MCF 10A (cell line): ENCODE measurements at regions of chr19 and their contacts with region 1.

Region 1: GRCh38 chr19:49937750-49938381 is 8.6 kb upstream of the NUP62 start:
- DNase-seq: peak; percentile 78
- H3K4me3 Mint-ChIP-seq: no peak overlapping the region
- H3K27ac Mint-ChIP-seq: no peak overlapping the region
- H3K4me1 Mint-ChIP-seq: no peaks in the 10 kb centered on the region
- H3K27me3 Mint-ChIP-seq: peaks cover 7% of the 10 kb centered on the region
- CTCF ChIP-seq: peak; percentile 98

Region 2: GRCh38 chr19:49913720-49914119 is 24.1 kb before region 1 on chr19:
- CTCF ChIA-PET with region 1: no interaction called
- POLR2A ChIA-PET with region 1: no interaction called
- intact Hi-C with region 1: no loop called
- DNase-seq: no peak
- H3K4me3 Mint-ChIP-seq: no peak overlapping the region
- H3K27ac Mint-ChIP-seq: no peak overlapping the region
- H3K4me1 Mint-ChIP-seq: peaks cover 9% of the 10 kb centered on the region
- H3K27me3 Mint-ChIP-seq: no peaks in the 10 kb centered on the region
- CTCF ChIP-seq: no peak

Region 3: DNA sequence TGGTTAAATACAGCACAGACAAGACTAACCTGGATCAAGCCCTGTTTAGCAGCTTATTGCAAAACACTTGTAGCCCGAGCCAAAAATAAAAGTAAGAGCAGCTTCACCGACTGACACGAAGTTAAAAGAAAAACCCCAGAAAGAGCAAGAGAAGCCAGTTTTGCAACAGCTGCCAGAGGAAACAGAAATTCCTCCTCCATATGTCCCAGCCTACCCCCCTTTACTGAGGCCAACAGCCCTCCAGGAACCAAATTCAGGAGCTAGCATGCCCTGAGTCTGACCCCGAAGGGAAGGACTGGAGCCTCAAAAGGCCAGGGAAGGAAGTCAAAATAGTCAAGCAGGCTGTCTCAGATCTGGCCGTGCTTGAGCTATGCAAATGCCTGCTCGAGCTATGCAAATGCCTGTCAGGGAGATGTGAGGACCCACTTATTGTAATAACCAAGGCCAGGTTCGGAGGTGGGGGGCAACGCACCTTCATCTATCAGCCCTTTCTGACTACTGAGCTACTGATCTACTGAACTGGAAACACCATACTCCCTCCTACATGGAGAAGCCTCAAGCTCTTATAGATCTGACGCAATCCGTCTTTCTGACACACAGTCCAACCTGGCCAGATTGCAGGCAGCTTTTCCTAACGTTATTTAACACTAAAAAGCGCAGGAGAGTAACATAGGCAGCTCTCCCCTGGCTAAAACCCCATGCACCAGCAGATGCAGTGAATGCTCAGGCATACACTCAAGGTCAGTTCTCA is 16.4 kb after region 1 on chr19:
- CTCF ChIA-PET with region 1: interaction called, 11 read pairs
- POLR2A ChIA-PET with region 1: interaction called, 3 read pairs
- intact Hi-C with region 1: no loop called
- DNase-seq: peak; percentile 18
- H3K4me3 Mint-ChIP-seq: peak overlapping the region; percentile 24
- H3K27ac Mint-ChIP-seq: no peak overlapping the region
- H3K4me1 Mint-ChIP-seq: peaks cover 7% of the 10 kb centered on the region
- H3K27me3 Mint-ChIP-seq: peaks cover 20% of the 10 kb centered on the region
- CTCF ChIP-seq: no peak

Region 4: DNA sequence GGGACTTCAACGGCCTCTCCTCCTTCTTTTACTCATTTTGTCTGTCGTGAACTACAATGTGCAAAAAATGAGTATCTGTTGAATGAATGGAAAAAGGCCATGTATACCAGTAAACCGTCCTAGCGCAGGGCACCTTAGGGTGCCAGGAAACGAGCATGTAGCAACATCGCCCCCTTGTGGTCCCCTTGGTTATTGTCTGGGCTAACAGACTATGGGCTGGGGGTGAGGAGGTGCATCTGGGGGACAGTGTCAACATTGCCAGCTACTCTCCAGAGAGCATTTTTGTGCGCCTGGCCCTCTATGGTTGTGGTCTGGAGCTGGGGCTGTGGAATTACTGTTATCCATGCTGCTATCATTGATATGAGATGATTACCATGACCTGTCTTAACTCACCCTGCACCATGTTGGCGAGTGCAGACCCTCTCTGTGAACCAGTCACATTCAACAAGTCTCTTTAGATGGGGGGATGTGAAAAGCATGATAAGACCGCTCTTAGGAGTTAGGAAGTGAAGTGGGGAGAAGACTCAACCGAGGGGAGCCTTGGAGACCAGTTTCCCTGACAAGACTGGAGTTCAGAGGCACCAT is 45.9 kb after region 1 on chr19:
- CTCF ChIA-PET with region 1: interaction called, 4 read pairs
- POLR2A ChIA-PET with region 1: no interaction called
- intact Hi-C with region 1: loop called (anchors 1 kb)
- DNase-seq: peak; percentile 69
- H3K4me3 Mint-ChIP-seq: no peak overlapping the region
- H3K27ac Mint-ChIP-seq: no peak overlapping the region
- H3K4me1 Mint-ChIP-seq: no peaks in the 10 kb centered on the region
- H3K27me3 Mint-ChIP-seq: no peaks in the 10 kb centered on the region
- CTCF ChIP-seq: peak; percentile 85

Region 5: GRCh38 chr19:50030937-50031336 is 93.1 kb after region 1 on chr19:
- CTCF ChIA-PET with region 1: no interaction called
- POLR2A ChIA-PET with region 1: no interaction called
- intact Hi-C with region 1: no loop called
- DNase-seq: no peak
- H3K4me3 Mint-ChIP-seq: no peak overlapping the region
- H3K27ac Mint-ChIP-seq: no peak overlapping the region
- H3K4me1 Mint-ChIP-seq: peaks cover 2% of the 10 kb centered on the region
- H3K27me3 Mint-ChIP-seq: no peaks in the 10 kb centered on the region
- CTCF ChIP-seq: no peak

Region 6: GRCh38 chr19:50042363-50043024 is 104.6 kb after region 1 on chr19:
- CTCF ChIA-PET with region 1: no interaction called
- POLR2A ChIA-PET with region 1: no interaction called
- intact Hi-C with region 1: no loop called
- DNase-seq: no peak
- H3K4me3 Mint-ChIP-seq: no peak overlapping the region
- H3K27ac Mint-ChIP-seq: no peak overlapping the region
- H3K4me1 Mint-ChIP-seq: no peaks in the 10 kb centered on the region
- H3K27me3 Mint-ChIP-seq: no peaks in the 10 kb centered on the region
- CTCF ChIP-seq: no peak

Region 7: GRCh38 chr19:50059045-50059444 is 121.2 kb after region 1 on chr19:
- CTCF ChIA-PET with region 1: no interaction called
- POLR2A ChIA-PET with region 1: no interaction called
- intact Hi-C with region 1: no loop called
- DNase-seq: no peak
- H3K4me3 Mint-ChIP-seq: no peak overlapping the region
- H3K27ac Mint-ChIP-seq: no peak overlapping the region
- H3K4me1 Mint-ChIP-seq: no peaks in the 10 kb centered on the region
- H3K27me3 Mint-ChIP-seq: no peaks in the 10 kb centered on the region
- CTCF ChIP-seq: no peak